Caco-2 (cell line): ENCODE measurements at regions of chr4 and their contacts with region 1.

Region 1: DNA sequence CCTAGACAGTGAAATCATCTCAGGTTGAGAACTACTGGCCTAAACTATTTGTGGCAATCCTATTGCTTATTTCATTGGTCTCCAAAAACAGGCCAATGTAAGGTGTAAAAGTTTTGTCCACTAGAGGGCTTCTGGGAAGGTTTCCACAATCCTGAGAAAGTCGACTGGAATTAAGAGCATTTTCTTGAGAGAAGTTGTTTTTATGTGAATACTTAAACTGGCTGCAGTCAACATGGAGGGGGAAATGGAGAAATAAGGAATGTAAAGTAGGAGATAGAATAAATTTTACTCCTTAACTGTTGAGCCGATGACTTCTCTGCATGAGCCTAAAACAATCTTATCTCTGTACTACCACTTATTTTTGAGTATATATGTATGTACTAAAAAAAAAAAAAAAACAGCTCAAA is 11.0 kb upstream of the EIF4E start:
- DNase-seq: peak in 1 of 2 experiments; percentile 59
- H3K4me3 ChIP-seq: no peak overlapping the region
- H3K4me3 Mint-ChIP-seq: no peak overlapping the region
- H3K27ac Mint-ChIP-seq: no peak overlapping the region
- H3K4me1 ChIP-seq: peaks cover 28% of the 10 kb centered on the region
- H3K4me1 Mint-ChIP-seq: peaks cover 27% of the 10 kb centered on the region
- H3K27me3 ChIP-seq: no peaks in the 10 kb centered on the region
- H3K27me3 Mint-ChIP-seq: no peaks in the 10 kb centered on the region
- CTCF ChIP-seq: peak; percentile 61 to 75

Region 2: GRCh38 chr4:99054428-99054994 is 114.6 kb after region 1 on chr4:
- CTCF ChIA-PET with region 1: interaction called, 4 read pairs
- POLR2A ChIA-PET with region 1: no interaction called
- intact Hi-C with region 1: loop called (anchors 2 kb)
- DNase-seq: no peak
- H3K4me3 ChIP-seq: no peak overlapping the region
- H3K4me3 Mint-ChIP-seq: no peak overlapping the region
- H3K27ac Mint-ChIP-seq: peak overlapping the region; percentile 69
- H3K4me1 ChIP-seq: peaks cover 6% of the 10 kb centered on the region; the same call in 1 of the 2 replicates
- H3K4me1 Mint-ChIP-seq: peaks cover 8% of the 10 kb centered on the region
- H3K27me3 ChIP-seq: no peaks in the 10 kb centered on the region
- H3K27me3 Mint-ChIP-seq: no peaks in the 10 kb centered on the region
- CTCF ChIP-seq: no peak